Right cardiac atrium (tissue), 5 donors: ENCODE measurements at regions of chr12 and their contacts with region 1.

Region 1: GRCh38 chr12:15842108-15842507 is 40.1 kb upstream of the STRAP start:
- DNase-seq: no peak
- ATAC-seq: peak; percentile 17 to 42
- H3K4me3 ChIP-seq: no peak overlapping the region
- H3K27ac ChIP-seq: no peak overlapping the region
- H3K4me1 ChIP-seq: no peaks in the 10 kb centered on the region
- H3K27me3 ChIP-seq: peaks cover 2% of the 10 kb centered on the region

Region 2: DNA sequence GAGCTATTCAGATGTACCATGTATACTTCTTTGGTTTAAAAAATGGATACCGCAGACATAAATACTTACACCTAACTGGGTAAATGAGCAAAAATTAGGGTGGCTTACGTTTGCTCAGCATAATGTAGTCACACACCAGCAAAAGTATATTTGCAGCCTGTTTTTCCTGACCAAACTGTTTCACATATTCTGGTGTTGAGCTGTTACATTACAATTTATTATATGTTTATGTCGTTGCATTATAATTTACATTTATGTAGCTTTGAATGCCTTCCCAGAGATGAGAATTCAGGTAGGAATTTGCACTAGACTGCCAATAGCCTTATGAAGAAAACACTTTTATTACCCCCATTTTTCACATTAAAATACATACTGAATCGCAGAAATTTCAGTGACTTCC is 336.5 kb before region 1 on chr12:
- intact Hi-C with region 1: no loop called
- DNase-seq: no peak
- ATAC-seq: no peak
- H3K4me3 ChIP-seq: no peak overlapping the region
- H3K27ac ChIP-seq: no peak overlapping the region
- H3K4me1 ChIP-seq: no peaks in the 10 kb centered on the region
- H3K27me3 ChIP-seq: no peaks in the 10 kb centered on the region

Region 3: GRCh38 chr12:15789220-15790171 is 52.6 kb before region 1 on chr12 and contains the start of gene EPS8:
- intact Hi-C with region 1: loop called in 1 of 4 experiments (anchors 10 kb)
- DNase-seq: peak; percentile 93 to 97 (median 97)
- ATAC-seq: peak; percentile 98 to 99
- H3K4me3 ChIP-seq: peak within 1 kb of the TSS; percentile 88
- H3K27ac ChIP-seq: peak within 1 kb of the TSS; percentile 77
- H3K4me1 ChIP-seq: no peaks in the 10 kb centered on the region
- H3K27me3 ChIP-seq: no peaks in the 10 kb centered on the region
- total RNA-seq, gene EPS8: 27.3 to 39.7 (median 32.8) TPM